WTC11 (cell line): ENCODE measurements at regions of chr20 and their contacts with region 1.

Region 1: GRCh38 chr20:22691369-22692118 is 107.2 kb upstream of the FOXA2 start:
- DNase-seq: peak; percentile 80
- ATAC-seq: peak; percentile 96
- H3K4me3 Mint-ChIP-seq: no peak overlapping the region
- H3K27ac Mint-ChIP-seq: no peak overlapping the region
- H3K4me1 Mint-ChIP-seq: peaks cover 3% of the 10 kb centered on the region
- H3K27me3 Mint-ChIP-seq: peaks cover 20% of the 10 kb centered on the region
- CTCF ChIP-seq: peak; percentile 77

Region 2: GRCh38 chr20:22546344-22546743 is 145.2 kb before region 1 on chr20:
- CTCF ChIA-PET with region 1: no interaction called
- POLR2A ChIA-PET with region 1: no interaction called
- DNase-seq: no peak
- ATAC-seq: no peak
- H3K4me3 Mint-ChIP-seq: no peak overlapping the region
- H3K27ac Mint-ChIP-seq: no peak overlapping the region
- H3K4me1 Mint-ChIP-seq: peaks cover 5% of the 10 kb centered on the region
- H3K27me3 Mint-ChIP-seq: peaks cover 22% of the 10 kb centered on the region
- CTCF ChIP-seq: no peak

Region 3: GRCh38 chr20:22586645-22587310 is 104.8 kb before region 1 on chr20:
- CTCF ChIA-PET with region 1: interaction called, 75 read pairs
- POLR2A ChIA-PET with region 1: no interaction called
- DNase-seq: peak; percentile 83
- ATAC-seq: peak; percentile 44
- H3K4me3 Mint-ChIP-seq: peak overlapping the region; percentile 79
- H3K27ac Mint-ChIP-seq: no peak overlapping the region
- H3K4me1 Mint-ChIP-seq: peaks cover 58% of the 10 kb centered on the region
- H3K27me3 Mint-ChIP-seq: peaks cover 91% of the 10 kb centered on the region
- CTCF ChIP-seq: peak; percentile 91

Region 4: DNA sequence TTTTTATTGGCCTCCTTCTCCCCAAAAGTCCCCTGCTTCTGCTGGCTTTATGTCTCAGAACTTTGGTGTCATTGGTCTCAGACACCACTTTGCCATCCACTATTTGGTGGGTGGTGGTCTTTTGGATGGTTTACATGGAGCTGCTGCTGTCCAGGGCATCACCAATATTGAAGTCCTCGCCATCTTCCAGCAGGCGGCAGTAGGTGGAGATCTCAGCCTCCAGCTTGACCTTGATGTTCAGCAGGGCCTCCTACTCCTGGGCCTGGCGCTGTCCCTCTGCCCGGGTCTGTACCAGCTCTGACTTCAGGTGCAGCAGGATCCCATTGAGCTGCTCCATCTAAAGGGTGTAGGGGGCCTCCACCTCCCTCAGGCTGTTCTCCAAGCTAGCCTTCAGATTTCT is 41.2 kb after region 1 on chr20:
- CTCF ChIA-PET with region 1: interaction called, 23 read pairs
- POLR2A ChIA-PET with region 1: no interaction called
- DNase-seq: no peak
- ATAC-seq: no peak
- H3K4me3 Mint-ChIP-seq: no peak overlapping the region
- H3K27ac Mint-ChIP-seq: no peak overlapping the region
- H3K4me1 Mint-ChIP-seq: no peaks in the 10 kb centered on the region
- H3K27me3 Mint-ChIP-seq: no peaks in the 10 kb centered on the region; the same call in 1 of the 2 replicates
- CTCF ChIP-seq: no peak

Region 5: DNA sequence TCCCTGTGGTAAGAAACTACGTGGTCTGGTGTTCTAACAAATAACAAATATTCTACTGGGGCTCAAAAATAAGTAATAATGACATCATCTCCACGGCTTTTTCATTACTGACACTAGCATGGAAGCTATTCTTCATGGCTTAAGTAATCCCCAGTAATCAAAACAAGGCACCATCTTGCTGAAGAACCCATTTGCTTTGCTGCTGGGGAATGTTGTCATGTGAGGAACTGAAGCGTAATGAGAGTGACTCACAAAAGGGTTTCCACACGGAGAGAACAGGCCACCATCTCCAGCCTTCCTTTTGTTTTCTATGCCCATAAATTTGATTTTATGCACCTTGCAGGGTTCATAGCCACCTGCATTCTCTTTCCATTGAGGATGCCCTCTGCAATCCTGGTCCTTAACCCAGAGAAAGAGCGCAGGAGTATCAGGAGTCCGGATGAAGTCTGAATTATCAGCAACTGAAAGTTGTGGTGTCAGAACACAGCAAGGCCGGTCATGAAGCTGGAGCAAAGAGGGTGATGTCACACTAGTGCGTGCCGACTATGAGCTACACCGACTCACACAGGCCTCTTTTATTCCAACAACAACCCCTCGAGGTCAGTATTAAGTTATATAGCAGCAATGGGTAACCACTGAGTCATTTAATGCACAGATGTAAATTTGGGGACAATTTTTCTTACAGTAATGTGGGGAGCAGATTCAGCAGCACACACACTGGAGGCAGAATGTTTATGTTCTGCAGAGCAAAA is 169.9 kb after region 1 on chr20:
- CTCF ChIA-PET with region 1: interaction called, 10 read pairs
- POLR2A ChIA-PET with region 1: no interaction called
- DNase-seq: no peak
- ATAC-seq: no peak
- H3K4me3 Mint-ChIP-seq: no peak overlapping the region
- H3K27ac Mint-ChIP-seq: no peak overlapping the region
- H3K4me1 Mint-ChIP-seq: peaks cover 8% of the 10 kb centered on the region; the same call in 1 of the 2 replicates
- H3K27me3 Mint-ChIP-seq: no peaks in the 10 kb centered on the region
- CTCF ChIP-seq: no peak

Region 6: DNA sequence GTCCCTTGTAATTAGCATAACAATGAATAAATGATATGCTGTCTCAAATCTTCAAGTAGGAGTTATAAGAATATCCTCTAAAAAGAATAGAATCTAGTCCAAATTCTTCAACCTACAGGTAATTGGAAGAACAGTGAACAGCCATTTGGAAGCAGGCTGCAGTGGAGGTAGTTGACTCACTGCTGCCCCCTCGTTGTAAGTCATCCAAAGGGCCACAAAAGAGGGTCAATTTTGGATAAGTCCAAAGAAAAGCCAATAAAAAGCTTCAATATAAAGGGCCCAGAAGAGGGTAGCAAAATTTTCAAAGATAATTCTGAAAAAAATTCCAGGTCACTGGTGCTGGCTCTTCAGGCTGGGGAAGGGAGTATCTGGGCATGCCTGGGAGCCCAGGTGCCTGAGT is 282.8 kb after region 1 on chr20:
- CTCF ChIA-PET with region 1: interaction called, 57 read pairs
- POLR2A ChIA-PET with region 1: no interaction called
- DNase-seq: peak; percentile 41
- ATAC-seq: peak; percentile 79
- H3K4me3 Mint-ChIP-seq: no peak overlapping the region
- H3K27ac Mint-ChIP-seq: no peak overlapping the region
- H3K4me1 Mint-ChIP-seq: peaks cover 15% of the 10 kb centered on the region
- H3K27me3 Mint-ChIP-seq: peaks cover 9% of the 10 kb centered on the region
- CTCF ChIP-seq: peak; percentile 47

Region 7: GRCh38 chr20:23235173-23236027 is 543.9 kb after region 1 on chr20:
- CTCF ChIA-PET with region 1: interaction called, 17 read pairs
- POLR2A ChIA-PET with region 1: no interaction called
- DNase-seq: peak; percentile 78
- ATAC-seq: peak; percentile 100
- H3K4me3 Mint-ChIP-seq: no peak overlapping the region
- H3K27ac Mint-ChIP-seq: no peak overlapping the region
- H3K4me1 Mint-ChIP-seq: no peaks in the 10 kb centered on the region
- H3K27me3 Mint-ChIP-seq: peaks cover 24% of the 10 kb centered on the region
- CTCF ChIP-seq: peak; percentile 87